ENCODE measurements at regions of chr20 and their contacts with region 1.

Region 1: DNA sequence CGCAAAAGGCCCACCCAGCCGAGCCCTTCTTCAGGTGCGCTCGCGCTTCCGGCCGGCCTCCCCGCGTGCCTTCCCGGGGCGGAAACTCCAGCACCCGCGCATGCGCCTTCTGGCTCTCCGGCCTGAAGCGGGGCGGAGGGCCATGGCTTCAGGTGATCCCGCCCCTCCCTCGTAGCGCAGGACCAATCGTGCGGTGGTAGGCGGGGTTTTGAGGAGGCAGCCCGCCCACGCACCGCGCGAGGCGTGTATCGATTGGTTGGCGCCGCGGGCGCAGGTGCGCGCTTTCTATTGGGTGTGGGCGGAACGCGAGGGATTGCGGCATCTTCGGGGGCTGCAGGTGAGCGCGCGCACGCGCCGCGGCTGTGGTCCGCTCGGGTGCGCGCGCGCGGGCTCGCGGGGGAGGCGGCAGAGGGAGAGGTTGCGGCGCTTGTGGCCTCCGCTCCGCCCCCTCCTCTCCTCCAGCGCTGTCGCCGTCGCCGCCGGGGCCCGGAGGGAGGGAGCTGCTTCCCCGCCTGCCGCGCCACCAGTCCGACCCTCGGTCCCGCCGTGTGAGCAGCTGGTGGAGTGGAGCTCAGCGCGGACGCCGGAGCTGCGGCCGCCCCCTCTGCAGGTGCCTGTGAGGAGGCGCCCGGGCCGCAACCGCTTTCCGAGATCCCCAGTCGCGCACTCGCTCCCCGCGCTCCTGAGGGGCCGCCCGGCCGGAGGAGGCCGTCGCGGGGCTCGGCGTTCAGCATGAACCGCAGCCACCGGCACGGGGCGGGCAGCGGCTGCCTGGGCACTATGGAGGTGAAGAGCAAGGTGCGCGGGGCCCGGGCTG is at the start of gene PARD6B:
- DNase-seq: peak; percentile 99
- H3K4me3 Mint-ChIP-seq: peak within 1 kb of the TSS; percentile 84
- H3K27ac Mint-ChIP-seq: peak within 1 kb of the TSS; percentile 78
- H3K4me1 Mint-ChIP-seq: peaks cover 30% of the 10 kb centered on the region
- H3K27me3 Mint-ChIP-seq: no peaks in the 10 kb centered on the region
- total RNA-seq, gene PARD6B: 4.7 and 5.7 TPM in 2 replicates

Region 2: DNA sequence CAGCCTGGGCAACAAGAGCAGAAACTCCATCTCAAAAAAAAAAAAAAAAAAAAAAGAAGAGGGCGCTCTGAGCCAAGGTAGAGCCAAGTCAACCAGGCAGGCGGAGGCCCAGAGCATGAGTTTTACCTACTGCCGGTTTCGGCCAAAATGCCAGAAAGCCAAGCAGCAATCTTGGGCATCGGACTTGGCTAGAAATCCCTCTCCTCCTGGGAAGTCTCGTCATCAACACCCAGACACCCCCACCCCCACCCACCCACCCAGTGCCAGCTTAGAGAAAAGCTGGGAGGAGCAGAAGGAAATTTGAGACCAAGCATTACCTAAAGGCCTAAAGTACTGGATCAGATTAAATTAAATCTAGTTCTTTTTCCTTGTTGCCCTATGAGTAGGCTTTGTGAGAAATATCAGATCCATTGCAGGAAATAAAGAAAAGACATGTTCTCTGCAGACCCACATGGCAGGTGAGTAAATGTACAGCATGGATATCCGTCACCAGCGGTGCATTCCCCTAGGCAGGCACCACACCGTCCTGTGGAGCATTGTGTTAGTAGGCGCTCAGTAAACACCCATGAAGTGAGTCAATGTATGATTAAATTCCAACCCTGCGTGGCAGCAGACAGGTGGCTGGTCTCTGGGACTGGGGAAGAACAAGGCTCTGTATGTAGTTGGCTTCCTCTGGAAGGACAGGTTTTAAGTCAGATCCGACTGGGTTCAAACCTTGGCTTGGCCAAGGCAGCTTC is 61.0 kb before region 1 on chr20:
- intact Hi-C with region 1: no loop called
- DNase-seq: no peak
- H3K4me3 Mint-ChIP-seq: no peak overlapping the region
- H3K27ac Mint-ChIP-seq: no peak overlapping the region
- H3K4me1 Mint-ChIP-seq: no peaks in the 10 kb centered on the region
- H3K27me3 Mint-ChIP-seq: peaks cover 2% of the 10 kb centered on the region

Region 3: DNA sequence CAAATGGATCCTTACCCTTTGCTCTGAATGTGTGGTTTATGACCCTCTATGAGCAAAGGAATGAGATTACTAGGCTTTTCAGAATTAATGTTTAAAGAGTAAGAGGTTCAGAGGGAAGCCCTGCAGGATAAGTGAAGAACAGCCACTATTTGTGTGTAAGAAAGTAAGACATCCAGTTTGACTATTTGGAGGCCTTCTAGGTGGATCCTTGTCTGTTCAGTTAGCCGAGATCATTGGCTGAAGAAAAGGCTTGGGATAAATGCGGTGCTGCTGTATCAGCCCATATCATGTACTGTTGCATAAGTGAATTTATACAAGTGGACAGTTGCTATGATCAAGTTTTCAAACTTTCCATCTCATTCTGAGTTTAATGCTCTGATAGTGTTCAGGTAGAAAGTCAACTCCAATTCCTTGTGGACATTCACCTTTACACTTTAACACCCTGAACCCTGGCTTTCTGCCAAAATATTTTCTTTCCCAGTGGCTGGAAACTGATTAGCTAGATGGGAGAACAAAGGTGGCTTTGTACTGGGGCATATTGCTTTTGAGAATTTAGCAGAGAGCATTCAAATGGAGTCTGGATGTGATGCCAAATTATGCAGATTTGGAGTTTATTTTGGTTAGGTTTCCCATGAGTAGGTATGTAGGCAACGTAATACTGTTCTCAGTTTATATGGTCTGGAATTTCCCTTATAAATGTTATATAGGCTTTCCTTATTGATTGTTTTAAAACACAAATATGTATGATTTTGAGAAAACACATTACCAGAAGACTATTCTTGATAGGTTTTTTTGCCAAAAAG is 15.1 kb after region 1 on chr20:
- intact Hi-C with region 1: loop called (anchors 2 kb)
- DNase-seq: no peak
- H3K4me3 Mint-ChIP-seq: no peak overlapping the region
- H3K27ac Mint-ChIP-seq: peak overlapping the region; percentile 73
- H3K4me1 Mint-ChIP-seq: peaks cover 27% of the 10 kb centered on the region
- H3K27me3 Mint-ChIP-seq: no peaks in the 10 kb centered on the region